ENCODE measurements at regions of chr3 and their contacts with region 1.

Region 1: DNA sequence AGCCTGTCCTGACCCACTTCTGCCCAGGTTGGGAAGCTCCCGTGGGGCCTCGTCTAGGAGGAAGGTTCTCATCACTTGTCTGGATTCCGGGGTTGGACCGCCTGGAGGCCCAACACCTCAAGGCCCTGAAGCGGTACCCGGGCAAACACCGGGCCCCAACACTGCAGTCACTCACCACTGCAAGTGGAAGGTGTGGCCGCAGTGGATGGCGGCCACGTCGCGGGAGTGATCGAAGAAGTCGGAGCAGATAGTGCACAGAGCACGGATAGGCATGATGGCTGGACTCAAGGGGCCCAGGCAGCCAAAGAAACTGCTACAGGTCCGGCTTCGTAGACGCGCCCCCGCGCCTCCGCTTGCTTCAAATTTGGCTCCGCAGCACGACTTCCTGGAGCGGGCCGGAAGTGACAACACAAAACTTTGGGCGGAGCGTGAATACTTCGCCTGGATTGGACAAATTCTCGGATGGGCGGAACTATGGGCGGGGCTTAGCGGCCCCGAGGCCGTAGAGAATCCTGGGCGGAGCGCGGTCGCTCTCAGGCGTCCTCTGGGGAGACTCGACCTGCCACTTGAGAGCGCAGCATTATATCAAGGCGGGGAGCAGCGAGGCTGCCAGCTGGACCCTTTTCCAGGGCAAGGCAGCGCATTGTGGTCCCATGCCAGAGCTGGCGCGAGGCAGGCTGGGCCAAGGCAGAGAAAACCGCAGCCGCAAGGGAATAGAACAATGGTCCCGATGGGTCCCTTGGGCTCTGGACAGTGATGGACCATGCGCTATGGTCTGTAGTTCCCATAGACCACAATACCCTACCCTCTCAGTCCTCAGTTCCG is at the start of gene TRAIP:
- DNase-seq: peak; percentile 86 to 97 (median 94)
- ATAC-seq: peak; percentile 99
- H3K4me3 ChIP-seq: peak within 1 kb of the TSS; percentile 58 to 79
- H3K4me3 Mint-ChIP-seq: peak within 1 kb of the TSS; percentile 84
- H3K27ac ChIP-seq: peak within 1 kb of the TSS; percentile 67 to 84
- H3K27ac Mint-ChIP-seq: peak within 1 kb of the TSS; percentile 86
- H3K4me1 ChIP-seq: peaks cover 14% of the 10 kb centered on the region
- H3K4me1 Mint-ChIP-seq: peaks cover 15% of the 10 kb centered on the region
- H3K27me3 ChIP-seq: no peaks in the 10 kb centered on the region
- H3K27me3 Mint-ChIP-seq: no peaks in the 10 kb centered on the region
- CTCF ChIP-seq: no peak
- total RNA-seq, gene TRAIP: 4.1 to 5.5 TPM

Region 2: DNA sequence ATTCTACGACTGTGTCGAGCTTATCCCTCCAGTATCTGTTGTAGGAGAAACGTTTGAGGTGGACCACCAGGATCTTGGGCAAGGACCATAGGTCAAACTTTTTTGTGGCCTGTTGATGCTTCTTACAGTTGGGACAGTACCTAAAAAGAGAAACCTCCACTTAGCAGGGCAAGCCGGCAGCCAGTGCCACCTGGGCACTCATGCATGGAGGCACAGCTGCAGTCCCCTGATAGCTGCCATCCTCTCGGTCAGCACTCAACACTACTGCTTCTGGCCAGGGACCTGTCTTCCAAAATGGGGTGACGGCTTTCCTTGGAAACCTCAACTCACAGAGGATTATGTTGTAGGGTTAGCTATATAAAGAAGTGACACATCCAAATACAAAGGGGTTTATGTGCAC is 572.4 kb before region 1 on chr3:
- CTCF ChIA-PET with region 1: no interaction called
- POLR2A ChIA-PET with region 1: no interaction called
- intact Hi-C with region 1: no loop called
- DNase-seq: no peak
- ATAC-seq: no peak
- H3K4me3 ChIP-seq: no peak overlapping the region
- H3K4me3 Mint-ChIP-seq: no peak overlapping the region
- H3K27ac ChIP-seq: no peak overlapping the region
- H3K27ac Mint-ChIP-seq: no peak overlapping the region
- H3K4me1 ChIP-seq: no peaks in the 10 kb centered on the region
- H3K4me1 Mint-ChIP-seq: no peaks in the 10 kb centered on the region
- H3K27me3 ChIP-seq: no peaks in the 10 kb centered on the region
- H3K27me3 Mint-ChIP-seq: no peaks in the 10 kb centered on the region
- CTCF ChIP-seq: no peak

Region 3: DNA sequence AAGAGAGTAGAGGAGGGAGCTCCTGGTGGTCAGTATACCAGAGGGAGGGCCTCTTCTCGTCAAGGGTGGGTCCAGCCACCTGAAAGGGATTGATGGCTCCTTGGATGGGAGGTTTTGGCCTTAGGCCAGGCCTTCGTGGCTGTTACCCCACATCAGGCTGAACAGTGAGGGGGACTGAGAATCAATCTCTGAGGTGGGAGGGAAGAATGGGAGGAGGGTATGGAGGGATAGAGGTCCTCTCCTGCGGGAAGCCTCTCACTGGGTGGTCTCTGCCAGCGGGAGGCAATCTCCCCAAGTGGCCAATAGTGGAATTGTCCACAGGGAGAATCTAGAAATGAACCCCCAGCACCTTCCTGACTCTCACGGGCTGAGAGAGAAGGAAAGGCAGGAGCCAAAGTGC is 248.6 kb before region 1 on chr3:
- CTCF ChIA-PET with region 1: no interaction called
- POLR2A ChIA-PET with region 1: no interaction called
- intact Hi-C with region 1: no loop called
- DNase-seq: no peak
- ATAC-seq: no peak
- H3K4me3 ChIP-seq: no peak overlapping the region
- H3K4me3 Mint-ChIP-seq: no peak overlapping the region
- H3K27ac ChIP-seq: no peak overlapping the region
- H3K27ac Mint-ChIP-seq: no peak overlapping the region
- H3K4me1 ChIP-seq: peaks cover 9% of the 10 kb centered on the region
- H3K4me1 Mint-ChIP-seq: peaks cover 14% of the 10 kb centered on the region
- H3K27me3 ChIP-seq: no peaks in the 10 kb centered on the region
- H3K27me3 Mint-ChIP-seq: no peaks in the 10 kb centered on the region
- CTCF ChIP-seq: no peak

Region 4: GRCh38 chr3:49656541-49657112 is 199.8 kb before region 1 on chr3:
- CTCF ChIA-PET with region 1: no interaction called
- POLR2A ChIA-PET with region 1: no interaction called
- intact Hi-C with region 1: no loop called
- DNase-seq: no peak
- ATAC-seq: no peak
- H3K4me3 ChIP-seq: no peak overlapping the region
- H3K4me3 Mint-ChIP-seq: no peak overlapping the region
- H3K27ac ChIP-seq: no peak overlapping the region
- H3K27ac Mint-ChIP-seq: no peak overlapping the region
- H3K4me1 ChIP-seq: no peaks in the 10 kb centered on the region
- H3K4me1 Mint-ChIP-seq: no peaks in the 10 kb centered on the region
- H3K27me3 ChIP-seq: no peaks in the 10 kb centered on the region
- H3K27me3 Mint-ChIP-seq: peaks cover 4% of the 10 kb centered on the region
- CTCF ChIP-seq: no peak

Region 5: GRCh38 chr3:49723628-49724551 is 132.5 kb before region 1 on chr3 and contains the start of gene GMPPB:
- CTCF ChIA-PET with region 1: no interaction called
- POLR2A ChIA-PET with region 1: no interaction called
- intact Hi-C with region 1: loop called (anchors 1 to 2 kb)
- DNase-seq: peak; percentile 82 to 95 (median 91)
- ATAC-seq: peak; percentile 72
- H3K4me3 ChIP-seq: peak within 1 kb of the TSS; percentile 91 to 95
- H3K4me3 Mint-ChIP-seq: peak within 1 kb of the TSS; percentile 86
- H3K27ac ChIP-seq: peak within 1 kb of the TSS; percentile 84 to 93
- H3K27ac Mint-ChIP-seq: peak within 1 kb of the TSS; percentile 90
- H3K4me1 ChIP-seq: peaks cover 19% of the 10 kb centered on the region
- H3K4me1 Mint-ChIP-seq: peaks cover 36% of the 10 kb centered on the region
- H3K27me3 ChIP-seq: no peaks in the 10 kb centered on the region
- H3K27me3 Mint-ChIP-seq: no peaks in the 10 kb centered on the region
- CTCF ChIP-seq: no peak
- total RNA-seq, gene GMPPB: 34.9 to 36.6 TPM

Region 6: DNA sequence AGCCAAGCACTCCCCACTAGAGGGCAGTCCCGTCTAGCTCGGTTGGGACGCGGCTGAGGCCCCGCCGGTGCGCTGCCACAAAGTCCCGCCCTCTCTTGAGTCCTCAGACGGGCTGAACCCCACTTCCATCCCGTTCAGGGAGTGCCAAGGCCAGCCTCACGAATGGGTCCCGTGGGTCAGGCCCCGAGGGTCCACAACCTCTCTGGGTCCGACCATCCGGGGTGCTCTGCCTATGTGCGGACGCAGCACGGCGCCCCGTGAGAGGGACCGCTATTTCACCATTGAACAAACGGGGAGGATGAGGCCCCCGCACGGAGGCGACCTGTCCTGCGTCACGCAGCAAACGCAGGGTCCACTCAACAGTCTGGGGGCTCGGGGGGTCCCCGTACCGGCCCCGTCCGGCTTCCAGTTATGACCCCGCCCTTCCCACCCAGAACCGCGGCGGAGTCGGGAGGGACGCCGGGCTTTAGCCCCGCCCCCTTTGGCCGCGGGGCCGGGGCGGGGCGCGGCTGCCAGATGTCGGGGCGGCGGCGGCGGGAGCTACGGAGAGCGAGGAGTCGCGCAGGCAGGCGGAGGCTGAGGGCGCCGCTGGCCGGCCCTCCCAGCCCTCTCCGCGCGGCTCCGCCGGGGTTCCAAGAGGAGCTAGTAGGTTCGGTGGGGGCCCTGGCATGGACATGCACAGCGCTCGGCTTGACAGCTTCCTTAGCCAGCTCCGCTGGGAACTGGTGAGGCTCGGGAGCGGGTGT is 53.5 kb before region 1 on chr3 and contains the start of gene INKA1:
- CTCF ChIA-PET with region 1: interaction called, 3 read pairs
- POLR2A ChIA-PET with region 1: interaction called, 3 read pairs
- intact Hi-C with region 1: loop called in 1 of 2 experiments (anchors 1 kb)
- DNase-seq: peak; percentile 77 to 94 (median 90)
- ATAC-seq: peak; percentile 83
- H3K4me3 ChIP-seq: peak within 1 kb of the TSS; percentile 98 to 99
- H3K4me3 Mint-ChIP-seq: peak within 1 kb of the TSS; percentile 94
- H3K27ac ChIP-seq: peak within 1 kb of the TSS; percentile 86 to 88
- H3K27ac Mint-ChIP-seq: peak within 1 kb of the TSS; percentile 92
- H3K4me1 ChIP-seq: peaks cover 43% of the 10 kb centered on the region
- H3K4me1 Mint-ChIP-seq: peaks cover 45% of the 10 kb centered on the region
- H3K27me3 ChIP-seq: no peaks in the 10 kb centered on the region
- H3K27me3 Mint-ChIP-seq: no peaks in the 10 kb centered on the region
- CTCF ChIP-seq: peak; percentile 75
- total RNA-seq, gene INKA1: 0.71 to 1.00 TPM

Region 7: DNA sequence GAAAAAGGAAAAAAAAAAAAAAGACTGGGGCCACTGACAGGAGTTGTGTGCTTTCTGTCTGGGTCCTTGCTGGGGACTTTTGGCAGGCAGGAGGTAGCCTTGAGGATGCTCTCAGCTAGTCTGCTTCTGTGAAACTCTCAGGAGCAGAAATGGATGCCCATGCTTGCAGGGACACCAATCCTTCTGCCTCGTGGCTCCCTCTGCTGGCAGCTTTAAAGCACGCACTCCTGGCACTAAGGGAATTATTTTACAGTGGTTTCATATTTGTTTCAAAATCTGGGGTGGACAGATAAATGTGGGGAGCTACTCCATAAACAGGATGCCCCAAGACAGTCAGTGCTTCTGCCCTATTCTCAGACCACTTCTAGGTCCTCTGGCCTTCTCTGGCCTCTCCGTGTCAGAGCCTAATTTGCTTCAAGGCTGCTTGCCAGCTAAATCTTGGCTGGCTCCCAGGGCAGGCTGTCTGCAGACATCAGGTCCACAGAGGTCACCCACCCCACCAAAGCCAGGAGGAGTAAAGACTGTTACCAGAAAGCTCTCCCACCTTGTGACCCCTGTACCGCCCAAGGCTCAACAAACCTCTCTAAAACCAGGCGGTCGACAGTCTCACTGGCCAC is 17.1 kb before region 1 on chr3:
- CTCF ChIA-PET with region 1: interaction called, 31 read pairs
- POLR2A ChIA-PET with region 1: no interaction called
- intact Hi-C with region 1: no loop called
- DNase-seq: peak; percentile 63 to 89 (median 85)
- ATAC-seq: peak; percentile 98
- H3K4me3 ChIP-seq: no peak overlapping the region
- H3K4me3 Mint-ChIP-seq: no peak overlapping the region
- H3K27ac ChIP-seq: no peak overlapping the region
- H3K27ac Mint-ChIP-seq: no peak overlapping the region
- H3K4me1 ChIP-seq: no peaks in the 10 kb centered on the region
- H3K4me1 Mint-ChIP-seq: peaks cover 2% of the 10 kb centered on the region
- H3K27me3 ChIP-seq: no peaks in the 10 kb centered on the region
- H3K27me3 Mint-ChIP-seq: no peaks in the 10 kb centered on the region
- CTCF ChIP-seq: peak; percentile 73

Region 8: GRCh38 chr3:49929331-49930240 is 73.2 kb after region 1 on chr3 and contains the start of gene MON1A:
- CTCF ChIA-PET with region 1: no interaction called
- POLR2A ChIA-PET with region 1: no interaction called
- intact Hi-C with region 1: loop called (anchors 1 to 2 kb)
- DNase-seq: peak; percentile 64 to 91 (median 85)
- ATAC-seq: peak; percentile 94
- H3K4me3 ChIP-seq: peak within 1 kb of the TSS; percentile 80 to 99
- H3K4me3 Mint-ChIP-seq: peak within 1 kb of the TSS; percentile 82
- H3K27ac ChIP-seq: peak within 1 kb of the TSS; percentile 68 to 72
- H3K27ac Mint-ChIP-seq: peak within 1 kb of the TSS; percentile 79
- H3K4me1 ChIP-seq: peaks cover 12% of the 10 kb centered on the region
- H3K4me1 Mint-ChIP-seq: peaks cover 34% of the 10 kb centered on the region
- H3K27me3 ChIP-seq: no peaks in the 10 kb centered on the region
- H3K27me3 Mint-ChIP-seq: no peaks in the 10 kb centered on the region
- CTCF ChIP-seq: no peak
- total RNA-seq, gene MON1A: 1.2 TPM

Region 9: GRCh38 chr3:50088725-50089608 is 232.6 kb after region 1 on chr3 and contains the start of gene RBM5:
- CTCF ChIA-PET with region 1: no interaction called
- POLR2A ChIA-PET with region 1: no interaction called
- intact Hi-C with region 1: loop called in 1 of 2 experiments (anchors 2 kb)
- DNase-seq: peak; percentile 80 to 94 (median 92)
- ATAC-seq: peak; percentile 99
- H3K4me3 ChIP-seq: peak within 1 kb of the TSS; percentile 100
- H3K4me3 Mint-ChIP-seq: peak within 1 kb of the TSS; percentile 96
- H3K27ac ChIP-seq: peak within 1 kb of the TSS; percentile 97 to 99
- H3K27ac Mint-ChIP-seq: peak within 1 kb of the TSS; percentile 98
- H3K4me1 ChIP-seq: peaks cover 27% of the 10 kb centered on the region
- H3K4me1 Mint-ChIP-seq: peaks cover 34% of the 10 kb centered on the region
- H3K27me3 ChIP-seq: no peaks in the 10 kb centered on the region
- H3K27me3 Mint-ChIP-seq: no peaks in the 10 kb centered on the region
- CTCF ChIP-seq: no peak
- total RNA-seq, gene RBM5: 376 to 409 TPM